Posterior cingulate gyrus (tissue), 11 donors: ENCODE measurements at regions of chr16 and their contacts with region 1.

Region 1: DNA sequence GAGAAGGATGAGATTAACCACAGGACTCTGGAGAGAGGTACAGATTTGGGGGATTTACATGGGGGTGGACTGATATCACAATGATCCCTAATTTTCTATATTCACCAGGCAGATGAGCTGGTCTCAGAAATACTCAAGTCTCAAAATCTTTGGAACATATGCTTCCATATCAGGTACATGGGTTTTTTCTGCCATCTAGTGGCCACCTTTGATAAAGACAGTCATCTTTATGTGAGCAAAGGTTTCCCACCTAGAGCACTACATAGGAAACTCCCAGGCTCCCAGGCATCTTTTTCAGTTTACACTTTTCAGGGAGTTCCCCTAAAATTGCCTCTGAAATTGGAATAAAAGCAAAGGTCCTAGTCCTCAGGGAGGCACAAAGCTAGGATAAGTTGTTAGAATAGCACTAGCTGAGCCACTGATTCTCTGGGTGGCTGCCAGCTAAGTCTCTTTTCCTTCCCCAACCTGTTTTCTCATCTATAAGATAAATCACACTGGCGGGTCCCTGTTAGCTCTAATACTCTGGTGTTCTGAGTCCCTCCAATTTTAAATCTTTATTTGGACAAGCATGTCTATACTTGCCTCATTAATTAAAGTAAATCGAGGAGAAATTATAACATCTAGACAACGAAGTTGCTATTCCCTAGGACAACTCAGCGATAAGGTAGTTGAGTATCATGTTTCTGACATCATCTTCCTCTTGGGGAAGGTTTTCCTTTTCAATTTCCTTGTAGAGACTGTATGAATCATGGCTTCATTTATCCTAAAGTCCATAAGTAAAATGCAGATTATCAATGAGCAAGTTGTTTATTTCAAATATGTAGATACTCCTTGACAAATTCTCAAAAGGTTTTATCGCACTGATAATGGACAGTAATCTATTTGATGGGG is 19.0 kb upstream of the MON1B start:
- DNase-seq: no peak

Region 2: GRCh38 chr16:75789237-75789636 is 1382.8 kb before region 1 on chr16:
- intact Hi-C with region 1: loop called (anchors 5 kb)
- DNase-seq: no peak

Region 3: GRCh38 chr16:77250400-77250799 is 78.4 kb after region 1 on chr16:
- intact Hi-C with region 1: no loop called
- DNase-seq: no peak